Dorsolateral prefrontal cortex (tissue), 120 donors: ENCODE measurements at regions of chr10 and their contacts with region 1.

Region 1: DNA sequence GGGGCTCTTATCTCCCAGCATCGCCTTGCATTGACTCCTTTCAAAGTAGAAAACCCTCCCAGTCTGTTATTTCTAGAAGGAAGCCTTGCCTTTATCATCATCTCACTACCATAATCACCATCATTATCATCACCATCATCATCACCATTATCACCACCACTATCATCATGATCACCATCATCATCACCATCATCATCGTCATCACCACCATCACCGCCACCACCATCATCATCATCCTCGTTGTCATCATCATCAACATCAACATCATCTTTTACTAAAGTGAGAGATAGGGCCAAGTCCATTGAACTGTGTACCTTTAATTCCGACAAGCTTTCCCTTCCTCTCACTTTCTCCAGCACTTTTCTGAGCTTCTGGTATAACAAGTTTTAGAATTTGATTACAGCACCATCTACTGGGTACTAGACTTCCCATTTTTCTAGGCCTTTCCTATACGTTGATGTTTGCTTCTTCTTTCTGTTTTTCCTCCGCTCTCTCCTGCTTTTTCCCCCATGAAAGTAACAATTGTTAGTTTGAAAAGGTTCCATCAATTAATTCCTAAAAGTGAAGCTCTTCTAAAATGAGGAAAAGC is 226.4 kb downstream of the BUB3 start:
- DNase-seq: no peak
- H3K4me3 ChIP-seq: no peak overlapping the region
- H3K27ac ChIP-seq: peak overlapping the region in 9 of 59 donors; percentile 5 to 49 (median 24)
- H3K27me3 ChIP-seq: peaks cover 0 to 3% (median 0%) of the 10 kb centered on the region in 45 donors
- CTCF ChIP-seq: peak; percentile 11 to 84 (median 63)

Region 2: DNA sequence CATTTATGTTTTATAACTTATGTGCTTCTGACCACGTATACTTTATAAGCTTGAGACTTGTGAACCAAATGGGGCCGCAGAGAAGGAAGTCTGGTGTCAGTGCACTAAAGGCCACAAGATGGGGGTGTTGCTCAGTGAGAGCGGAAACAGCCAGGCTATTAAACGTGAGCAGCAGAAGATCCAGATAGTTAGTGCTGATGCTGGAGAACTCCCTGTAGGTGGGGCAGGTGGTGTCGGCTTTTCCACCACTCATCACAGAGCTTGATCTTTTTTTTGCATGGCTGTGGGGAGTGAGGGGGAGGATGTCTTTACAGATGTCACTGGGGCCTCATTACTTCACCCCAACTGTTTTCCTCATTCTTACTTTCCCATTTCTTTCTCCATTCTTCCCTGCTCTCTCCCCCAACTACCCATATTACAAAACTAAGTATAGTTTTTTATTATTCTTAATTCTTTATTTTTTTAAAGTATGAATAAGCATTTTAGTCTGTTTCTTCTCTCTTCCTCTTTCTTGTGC is 337.1 kb before region 1 on chr10:
- intact Hi-C with region 1: loop called (anchors 2 to 10 kb)
- DNase-seq: peak; percentile 10 to 78 (median 64)
- H3K4me3 ChIP-seq: no peak overlapping the region
- H3K27ac ChIP-seq: peak overlapping the region in 23 of 59 donors; percentile 3 to 75 (median 34)
- H3K27me3 ChIP-seq: no peaks in the 10 kb centered on the region
- CTCF ChIP-seq: peak; percentile 49 to 92 (median 80)

Region 3: GRCh38 chr10:123132576-123133477 is 247.8 kb before region 1 on chr10:
- intact Hi-C with region 1: loop called (anchors 2 to 5 kb)
- DNase-seq: peak; percentile 68 to 86 (median 81)
- H3K4me3 ChIP-seq: peak overlapping the region in 43 of 59 donors; percentile 2 to 63 (median 31)
- H3K27ac ChIP-seq: no peak overlapping the region
- H3K27me3 ChIP-seq: peaks cover 31 to 98% (median 71%) of the 10 kb centered on the region in 45 donors
- CTCF ChIP-seq: peak; percentile 40 to 98 (median 90)

Region 4: DNA sequence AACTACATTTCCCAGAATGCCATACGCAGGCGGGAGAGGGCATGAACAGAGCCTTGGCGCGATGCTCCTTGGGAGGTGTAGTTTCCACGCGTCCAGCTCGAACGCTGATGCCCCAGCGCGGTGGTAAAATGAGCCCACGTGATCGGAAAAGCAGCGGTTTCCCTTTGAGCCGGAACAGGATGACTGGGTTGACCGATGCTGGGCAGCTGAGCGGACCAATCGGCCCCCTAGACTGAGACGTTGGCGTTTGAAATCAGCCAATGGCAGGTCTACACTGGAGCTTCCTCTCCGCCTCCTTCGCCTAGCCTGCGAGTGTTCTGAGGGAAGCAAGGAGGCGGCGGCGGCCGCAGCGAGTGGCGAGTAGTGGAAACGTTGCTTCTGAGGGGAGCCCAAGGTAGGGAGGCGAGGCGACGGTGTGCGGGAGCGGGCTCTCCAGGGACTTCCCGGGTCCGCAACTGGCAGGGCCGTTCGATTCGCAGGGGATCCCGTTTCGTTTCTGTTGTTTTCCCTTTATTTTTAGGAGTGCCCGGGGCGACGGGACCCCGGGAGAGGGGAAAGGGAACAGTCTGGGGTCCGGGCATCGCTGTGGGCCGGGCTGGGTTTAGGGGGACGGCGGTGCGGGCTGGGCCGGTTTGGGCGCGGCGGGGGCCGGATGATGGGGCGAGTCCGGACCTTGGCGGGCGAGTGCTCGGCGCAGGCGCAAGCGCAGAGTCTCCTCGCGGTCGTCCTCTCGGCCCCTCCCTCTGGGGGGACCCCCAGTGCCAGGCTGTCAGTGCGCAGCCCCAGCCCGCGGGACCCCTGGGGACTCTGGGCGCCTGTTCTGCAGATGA is 226.3 kb before region 1 on chr10 and contains the start of gene BUB3:
- intact Hi-C with region 1: loop called in 1 of 2 experiments (anchors 5 kb)
- DNase-seq: peak; percentile 98 to 100 (median 100)
- H3K4me3 ChIP-seq: peak within 1 kb of the TSS; percentile 68 to 100 (median 93)
- H3K27ac ChIP-seq: peak within 1 kb of the TSS in 54 of 59 donors; percentile 25 to 93 (median 82)
- H3K27me3 ChIP-seq: peaks cover 17 to 42% (median 37%) of the 10 kb centered on the region in 45 donors
- CTCF ChIP-seq: peak in 40 of 56 donors; percentile 10 to 59 (median 42)
- total RNA-seq, gene BUB3: 42.8 to 88.8 (median 64.1) TPM

Region 5: GRCh38 chr10:123266971-123267370 is 113.6 kb before region 1 on chr10:
- intact Hi-C with region 1: no loop called
- DNase-seq: no peak
- H3K4me3 ChIP-seq: no peak overlapping the region
- H3K27ac ChIP-seq: no peak overlapping the region
- H3K27me3 ChIP-seq: no peaks in the 10 kb centered on the region
- CTCF ChIP-seq: no peak

Region 6: GRCh38 chr10:123301077-123301857 is 79.3 kb before region 1 on chr10:
- intact Hi-C with region 1: loop called in 1 of 2 experiments (anchors 5 kb)
- DNase-seq: peak; percentile 14 to 92 (median 90)
- H3K4me3 ChIP-seq: peak overlapping the region in 1 of 59 donors; percentile 3
- H3K27ac ChIP-seq: peak overlapping the region in 58 of 59 donors; percentile 51 to 98 (median 91)
- H3K27me3 ChIP-seq: no peaks in the 10 kb centered on the region
- CTCF ChIP-seq: peak in 25 of 56 donors; percentile 2 to 52 (median 22)

Region 7: DNA sequence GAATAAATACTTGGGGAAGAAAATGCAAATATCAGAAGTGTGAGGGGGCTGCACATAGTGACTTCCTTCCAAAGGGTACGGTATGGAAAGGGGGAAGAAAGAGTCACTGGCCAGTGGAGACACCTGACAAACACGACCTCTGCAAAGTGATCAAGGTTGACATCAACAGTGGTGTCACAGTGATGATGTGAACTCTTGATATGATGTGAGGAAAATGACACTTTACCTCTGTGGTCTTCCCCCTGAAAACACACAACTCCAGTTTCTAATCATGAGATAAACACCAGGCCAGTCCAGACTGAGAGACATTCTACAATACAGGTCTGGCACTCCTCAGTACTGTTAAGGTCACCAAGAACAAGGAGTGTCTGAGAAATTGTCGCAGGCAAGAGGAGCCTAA is 56.7 kb before region 1 on chr10:
- intact Hi-C with region 1: loop called in 1 of 2 experiments (anchors 5 kb)
- DNase-seq: no peak
- H3K4me3 ChIP-seq: no peak overlapping the region
- H3K27ac ChIP-seq: no peak overlapping the region
- H3K27me3 ChIP-seq: peaks cover 0 to 5% (median 0%) of the 10 kb centered on the region in 45 donors
- CTCF ChIP-seq: no peak

Region 8: GRCh38 chr10:123537188-123537961 is 156.8 kb after region 1 on chr10:
- intact Hi-C with region 1: no loop called
- DNase-seq: no peak
- H3K4me3 ChIP-seq: no peak overlapping the region
- H3K27ac ChIP-seq: no peak overlapping the region
- H3K27me3 ChIP-seq: no peaks in the 10 kb centered on the region
- CTCF ChIP-seq: no peak